ENCODE measurements at regions of chr9 and their contacts with region 1.

Region 1: GRCh38 chr9:119365291-119366027 is 3.8 kb downstream of the BRINP1 start:
- DNase-seq: peak; percentile 17
- H3K4me3 ChIP-seq: no peak overlapping the region
- H3K27ac ChIP-seq: no peak overlapping the region
- H3K4me1 ChIP-seq: no peaks in the 10 kb centered on the region
- H3K27me3 ChIP-seq: peaks cover 0 to 16% of the 10 kb centered on the region in 2 experiments
- CTCF ChIP-seq: peak; percentile 32 to 40
- POLR2A ChIP-seq: no peak

Region 2: DNA sequence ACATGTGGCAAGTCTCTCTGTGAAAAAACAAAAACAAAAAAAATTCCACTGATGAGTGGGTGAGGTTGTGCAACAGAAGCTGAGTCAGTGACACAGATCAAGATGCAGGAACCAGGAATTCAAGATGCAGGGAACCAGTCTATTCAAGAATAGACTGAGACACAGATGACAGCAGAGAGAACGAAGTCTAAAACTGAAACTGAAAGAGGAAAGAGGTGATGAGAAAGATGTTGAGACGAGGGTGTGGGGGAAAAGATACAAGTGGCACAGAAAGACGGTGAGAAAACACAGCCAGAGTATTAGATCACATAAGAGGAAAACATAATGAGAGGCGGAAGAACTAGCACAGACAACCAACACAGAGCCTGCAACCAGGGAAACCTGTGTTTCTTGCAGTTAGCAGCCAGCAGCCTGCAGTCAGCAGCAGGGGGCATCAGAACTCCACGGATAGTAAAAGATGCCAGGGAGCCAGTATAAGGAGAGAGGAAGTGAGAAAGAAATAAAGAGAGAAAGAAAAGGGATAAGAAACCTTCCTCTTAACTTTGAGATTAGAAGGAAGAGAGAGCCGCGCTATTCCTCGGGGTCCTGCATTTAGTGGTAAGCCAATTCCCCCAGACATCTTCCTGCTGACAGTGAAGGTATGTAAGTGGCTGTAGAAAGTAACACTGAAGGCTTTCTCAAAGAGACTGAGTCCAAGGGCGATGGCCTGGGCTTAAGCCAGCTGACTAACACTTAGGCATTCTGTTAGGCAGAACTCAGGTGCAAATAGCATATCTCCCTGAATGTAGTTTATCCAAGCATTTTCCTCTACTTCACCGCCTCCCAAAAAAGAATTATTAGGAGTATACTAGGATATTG is 1582.3 kb before region 1 on chr9:
- CTCF ChIA-PET with region 1: interaction called, 8 read pairs
- POLR2A ChIA-PET with region 1: no interaction called
- dilution Hi-C with region 1: no loop called
- intact Hi-C with region 1: loop called (anchors 2 kb)
- DNase-seq: peak; percentile 83
- H3K4me3 ChIP-seq: peak overlapping the region; percentile 39 to 77 (median 52)
- H3K27ac ChIP-seq: no peak overlapping the region
- H3K4me1 ChIP-seq: peaks cover 7% of the 10 kb centered on the region
- H3K27me3 ChIP-seq: no peaks in the 10 kb centered on the region
- CTCF ChIP-seq: peak; percentile 80
- POLR2A ChIP-seq: no peak

Region 3: GRCh38 chr9:118170032-118170955 is 1195.2 kb before region 1 on chr9:
- CTCF ChIA-PET with region 1: interaction called, 6 read pairs
- POLR2A ChIA-PET with region 1: no interaction called
- dilution Hi-C with region 1: no loop called
- intact Hi-C with region 1: loop called (anchors 5 kb)
- DNase-seq: peak; percentile 42
- H3K4me3 ChIP-seq: no peak overlapping the region
- H3K27ac ChIP-seq: no peak overlapping the region
- H3K4me1 ChIP-seq: no peaks in the 10 kb centered on the region
- H3K27me3 ChIP-seq: no peaks in the 10 kb centered on the region
- CTCF ChIP-seq: peak; percentile 53 to 56
- POLR2A ChIP-seq: no peak

Region 4: GRCh38 chr9:118522093-118523028 is 843.1 kb before region 1 on chr9:
- CTCF ChIA-PET with region 1: interaction called, 15 read pairs
- POLR2A ChIA-PET with region 1: no interaction called
- dilution Hi-C with region 1: no loop called
- intact Hi-C with region 1: loop called (anchors 1 kb)
- DNase-seq: peak; percentile 79
- H3K4me3 ChIP-seq: no peak overlapping the region
- H3K27ac ChIP-seq: no peak overlapping the region
- H3K4me1 ChIP-seq: no peaks in the 10 kb centered on the region
- H3K27me3 ChIP-seq: peaks cover 0 to 2% of the 10 kb centered on the region in 2 experiments
- CTCF ChIP-seq: peak; percentile 72 to 89
- POLR2A ChIP-seq: no peak